ENCODE measurements at regions of chr12 and their contacts with region 1.

Region 1: GRCh38 chr12:109844983-109845823 is 12.0 kb upstream of the TRPV4 start:
- H3K4me3 ChIP-seq: peak overlapping the region; percentile 23; the same call in 1 of the 2 replicates
- H3K27ac ChIP-seq: no peak overlapping the region
- H3K4me1 ChIP-seq: no peaks in the 10 kb centered on the region
- CTCF ChIP-seq: peak; percentile 99

Region 2: GRCh38 chr12:108773798-108774788 is 1071.1 kb before region 1 on chr12:
- CTCF ChIA-PET with region 1: no interaction called
- POLR2A ChIA-PET with region 1: no interaction called
- H3K4me3 ChIP-seq: no peak overlapping the region
- H3K27ac ChIP-seq: no peak overlapping the region
- H3K4me1 ChIP-seq: no peaks in the 10 kb centered on the region
- CTCF ChIP-seq: no peak

Region 3: GRCh38 chr12:109573029-109573913 is 271.9 kb before region 1 on chr12 and contains the starts of genes MMAB and MVK:
- CTCF ChIA-PET with region 1: no interaction called
- POLR2A ChIA-PET with region 1: no interaction called
- H3K4me3 ChIP-seq: peak within 1 kb of the TSS; percentile 78
- H3K27ac ChIP-seq: peak within 1 kb of the TSS; percentile 80
- H3K4me1 ChIP-seq: no peaks in the 10 kb centered on the region
- CTCF ChIP-seq: no peak

Region 4: DNA sequence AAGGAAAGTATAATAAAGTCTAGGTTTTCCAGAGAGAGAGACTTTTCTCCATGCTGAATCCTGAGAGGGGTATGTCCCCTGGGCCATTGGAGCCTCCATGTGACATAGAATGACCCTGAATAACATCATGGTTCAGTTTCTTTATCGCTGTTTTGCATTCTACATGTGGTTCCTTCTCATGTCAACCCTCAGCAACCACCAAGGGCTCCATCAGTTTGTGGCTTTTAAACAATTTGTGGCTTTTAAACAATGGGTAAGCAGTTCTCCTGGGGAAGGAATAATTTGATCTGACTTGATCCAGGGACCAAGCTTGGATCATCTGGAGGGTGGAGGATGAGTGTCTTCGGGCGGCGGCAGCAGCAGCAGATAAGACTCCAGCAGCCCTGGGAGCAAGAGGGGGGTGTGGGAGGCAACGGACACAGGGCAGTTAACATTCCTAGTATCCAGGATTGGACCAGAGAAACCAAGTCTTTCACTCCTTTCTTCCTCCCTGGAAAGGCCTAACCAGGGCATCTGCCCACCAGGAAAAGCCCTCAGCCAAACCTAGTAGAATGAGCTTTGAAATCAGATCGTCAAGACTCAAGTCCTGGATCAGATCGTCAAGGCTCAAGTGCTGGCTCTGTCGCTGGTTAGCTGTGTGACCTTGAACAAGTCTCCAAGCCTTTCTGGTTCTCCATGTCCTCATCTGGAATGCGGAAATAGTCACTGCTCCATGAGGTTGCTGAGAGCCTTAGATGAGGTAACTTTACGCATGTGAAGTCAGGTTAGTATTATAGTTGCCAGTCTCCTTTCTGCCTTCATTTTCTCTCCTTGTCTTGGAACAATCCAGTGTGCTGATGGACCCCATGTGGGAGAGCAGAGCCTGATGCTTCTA is 159.4 kb before region 1 on chr12:
- CTCF ChIA-PET with region 1: no interaction called
- POLR2A ChIA-PET with region 1: no interaction called
- H3K4me3 ChIP-seq: no peak overlapping the region
- H3K27ac ChIP-seq: no peak overlapping the region
- H3K4me1 ChIP-seq: peaks cover under 1% of the 10 kb centered on the region; the same call in 1 of the 2 replicates
- CTCF ChIP-seq: no peak

Region 5: DNA sequence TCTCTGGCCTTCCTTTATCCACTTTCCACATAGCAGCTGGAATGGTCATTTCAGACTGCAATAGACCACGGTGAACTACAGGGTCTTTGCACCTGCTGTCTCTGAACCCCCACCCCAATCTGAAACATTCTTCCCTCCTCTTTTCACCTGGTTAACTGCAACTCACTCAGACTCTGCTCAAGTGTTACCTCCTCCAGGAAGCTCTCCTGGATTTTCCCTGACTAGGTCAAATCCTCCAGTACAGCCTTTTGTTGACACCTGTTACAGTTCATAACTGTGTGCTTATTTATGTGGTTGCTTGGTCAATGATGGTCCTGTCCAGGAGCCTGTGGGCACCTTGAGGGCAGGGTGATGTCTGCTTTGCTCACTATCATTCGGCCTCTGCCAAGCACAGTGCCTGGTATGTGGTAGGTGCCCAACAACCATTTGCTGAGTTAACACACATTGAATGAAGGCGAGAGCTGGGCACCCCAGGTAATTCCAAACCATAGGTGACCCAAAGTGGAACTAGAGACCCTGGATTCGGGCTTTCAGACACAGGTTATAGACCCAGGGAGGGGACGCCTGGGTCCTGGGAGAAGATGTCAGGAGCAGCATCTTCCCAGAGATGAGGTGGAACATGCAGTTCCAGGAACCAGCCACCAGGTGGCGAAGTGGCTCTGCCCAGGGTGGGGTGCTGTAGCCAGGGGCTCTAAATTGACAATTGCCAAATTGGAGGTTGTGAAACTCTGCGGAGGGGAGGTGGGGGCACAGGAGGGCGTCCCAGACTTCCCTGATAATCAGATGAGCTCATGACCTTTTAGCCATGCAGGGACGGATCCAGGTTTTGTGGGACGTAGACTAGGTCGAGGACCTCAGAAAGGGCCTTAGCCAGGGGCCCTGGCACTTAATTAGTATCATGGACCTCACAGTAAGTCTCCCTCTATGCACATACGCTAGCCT is 40.1 kb before region 1 on chr12:
- CTCF ChIA-PET with region 1: interaction called, 131 read pairs
- POLR2A ChIA-PET with region 1: no interaction called
- H3K4me3 ChIP-seq: no peak overlapping the region
- H3K27ac ChIP-seq: no peak overlapping the region
- H3K4me1 ChIP-seq: no peaks in the 10 kb centered on the region
- CTCF ChIP-seq: peak; percentile 75

Region 6: GRCh38 chr12:109814600-109815150 is 30.5 kb before region 1 on chr12:
- CTCF ChIA-PET with region 1: interaction called, 13 read pairs
- POLR2A ChIA-PET with region 1: no interaction called
- H3K4me3 ChIP-seq: no peak overlapping the region
- H3K27ac ChIP-seq: no peak overlapping the region
- H3K4me1 ChIP-seq: no peaks in the 10 kb centered on the region
- CTCF ChIP-seq: no peak

Region 7: GRCh38 chr12:109822951-109823411 is 22.2 kb before region 1 on chr12:
- CTCF ChIA-PET with region 1: interaction called, 10 read pairs
- POLR2A ChIA-PET with region 1: no interaction called
- H3K4me3 ChIP-seq: no peak overlapping the region
- H3K27ac ChIP-seq: no peak overlapping the region
- H3K4me1 ChIP-seq: no peaks in the 10 kb centered on the region
- CTCF ChIP-seq: no peak

Region 8: GRCh38 chr12:109828236-109828550 is 17.0 kb before region 1 on chr12:
- CTCF ChIA-PET with region 1: interaction called, 10 read pairs
- POLR2A ChIA-PET with region 1: interaction called, 3 read pairs
- H3K4me3 ChIP-seq: no peak overlapping the region
- H3K27ac ChIP-seq: no peak overlapping the region
- H3K4me1 ChIP-seq: no peaks in the 10 kb centered on the region
- CTCF ChIP-seq: no peak

Region 9: DNA sequence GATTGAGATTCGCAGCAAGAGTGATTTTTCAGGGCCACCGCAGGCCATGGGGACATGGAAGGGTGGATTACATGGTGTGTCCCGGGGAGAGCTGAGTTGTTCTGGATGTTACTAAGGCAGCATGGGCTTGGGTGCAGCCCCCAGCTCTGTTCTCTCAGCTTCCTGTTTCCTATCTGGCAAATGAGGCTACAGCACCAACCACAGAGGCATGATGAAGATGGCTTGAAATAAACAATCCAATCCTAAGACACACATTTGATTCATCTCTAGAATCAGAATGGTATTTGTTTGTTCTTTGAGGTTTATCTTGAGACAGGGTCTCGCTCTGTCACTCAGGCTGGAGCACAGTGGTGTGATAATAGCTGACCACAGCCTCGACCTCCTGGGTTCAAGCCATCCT is 13.6 kb after region 1 on chr12:
- CTCF ChIA-PET with region 1: interaction called, 28 read pairs
- POLR2A ChIA-PET with region 1: no interaction called
- H3K4me3 ChIP-seq: no peak overlapping the region
- H3K27ac ChIP-seq: no peak overlapping the region
- H3K4me1 ChIP-seq: peaks cover 4% of the 10 kb centered on the region; the same call in 1 of the 2 replicates
- CTCF ChIP-seq: no peak

Region 10: DNA sequence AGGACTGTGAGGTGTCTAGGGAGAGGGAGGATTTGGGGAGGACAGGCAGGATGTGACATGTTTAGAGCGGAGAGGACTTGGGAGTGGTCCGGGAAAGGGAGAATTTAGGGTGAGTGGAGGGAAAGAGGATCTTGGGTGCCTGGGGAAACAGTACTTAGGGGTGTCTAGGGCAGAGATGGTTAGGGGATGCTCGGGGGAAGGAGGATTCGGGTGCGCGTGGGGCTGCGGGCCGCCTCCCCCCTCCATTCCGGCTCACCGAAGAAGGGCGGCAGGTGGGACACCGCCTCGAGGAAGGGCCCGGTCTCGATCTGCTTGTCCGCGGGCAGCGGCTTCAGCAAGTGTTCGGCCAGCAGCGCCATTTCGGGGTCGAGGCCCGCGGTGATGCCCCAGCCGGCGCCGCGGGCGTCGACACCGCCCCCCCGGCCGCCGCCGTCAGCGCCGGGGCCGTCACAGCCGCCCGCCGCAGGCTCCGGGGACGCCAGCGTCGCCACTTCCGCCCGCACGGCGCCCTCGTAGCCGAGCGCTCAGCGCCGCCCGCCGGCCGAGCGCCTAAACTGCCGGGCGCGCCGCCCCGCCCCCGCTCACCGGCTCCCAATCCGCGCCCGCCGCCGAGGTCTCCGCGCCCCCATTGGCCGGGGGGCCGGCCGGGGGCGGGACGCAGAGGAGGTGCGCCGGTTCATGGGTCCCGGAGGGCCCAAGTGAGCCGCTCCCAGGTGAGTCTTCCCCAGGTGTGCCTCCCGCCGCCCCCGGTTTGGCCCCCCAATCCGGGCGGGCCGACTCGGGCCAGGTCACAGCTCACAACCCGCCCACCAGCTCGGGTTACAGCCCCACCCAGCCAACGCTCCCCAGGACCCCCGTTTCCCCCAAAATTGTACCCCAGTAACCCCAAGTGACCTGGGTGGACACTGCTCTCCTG is 35.1 kb after region 1 on chr12 and contains the start of gene GLTP:
- CTCF ChIA-PET with region 1: interaction called, 10 read pairs
- POLR2A ChIA-PET with region 1: no interaction called
- H3K4me3 ChIP-seq: peak within 1 kb of the TSS; percentile 71
- H3K27ac ChIP-seq: peak within 1 kb of the TSS; percentile 51; the same call in 1 of the 2 replicates
- H3K4me1 ChIP-seq: peaks cover 8% of the 10 kb centered on the region
- CTCF ChIP-seq: peak; percentile 62

Measured in HEK293 (cell line).